ENCODE measurements at regions of chr10 and their contacts with region 1.

Region 1: DNA sequence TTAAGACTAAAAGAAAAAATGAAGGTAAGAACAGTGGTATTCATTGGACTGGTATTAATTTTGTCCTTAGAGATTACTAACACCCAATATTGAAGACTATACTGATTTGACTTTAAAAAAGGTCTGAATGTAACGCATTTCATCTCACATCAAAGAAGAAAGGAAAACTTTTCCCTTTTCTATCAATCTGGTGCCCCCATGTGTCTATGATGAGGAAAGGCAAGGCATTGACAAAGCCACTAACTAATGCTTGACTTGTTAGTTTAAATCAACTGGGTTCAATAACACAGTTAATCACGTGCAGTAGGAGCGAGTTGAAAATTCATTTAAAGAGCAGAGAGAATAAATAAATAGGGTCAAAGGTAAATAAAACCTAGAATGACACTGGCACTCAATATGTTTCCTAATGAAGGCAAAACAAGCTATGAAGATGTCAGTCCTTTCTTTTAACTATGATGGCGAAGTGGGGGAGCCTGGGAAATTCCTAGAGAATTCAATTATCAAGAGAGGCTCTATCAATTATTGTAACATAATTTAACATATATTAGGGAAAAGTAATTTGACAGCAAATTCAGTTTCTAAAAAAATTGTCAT is 180.9 kb downstream of the ANK3 start:
- DNase-seq: no peak
- ATAC-seq: no peak
- H3K4me3 Mint-ChIP-seq: no peak overlapping the region
- H3K27ac Mint-ChIP-seq: no peak overlapping the region
- H3K4me1 Mint-ChIP-seq: peaks cover 8% of the 10 kb centered on the region
- H3K27me3 Mint-ChIP-seq: peaks cover 2% of the 10 kb centered on the region
- CTCF ChIP-seq: peak; percentile 60

Region 2: GRCh38 chr10:60099998-60100747 is 108.6 kb before region 1 on chr10:
- CTCF ChIA-PET with region 1: interaction called, 5 read pairs
- POLR2A ChIA-PET with region 1: no interaction called
- intact Hi-C with region 1: loop called (anchors 5 kb)
- DNase-seq: peak; percentile 9
- ATAC-seq: no peak
- H3K4me3 Mint-ChIP-seq: no peak overlapping the region
- H3K27ac Mint-ChIP-seq: no peak overlapping the region
- H3K4me1 Mint-ChIP-seq: no peaks in the 10 kb centered on the region
- H3K27me3 Mint-ChIP-seq: peaks cover 2% of the 10 kb centered on the region
- CTCF ChIP-seq: peak; percentile 75

Region 3: GRCh38 chr10:60148264-60148840 is 60.4 kb before region 1 on chr10:
- CTCF ChIA-PET with region 1: no interaction called
- POLR2A ChIA-PET with region 1: no interaction called
- intact Hi-C with region 1: no loop called
- DNase-seq: no peak
- ATAC-seq: no peak
- H3K4me3 Mint-ChIP-seq: no peak overlapping the region
- H3K27ac Mint-ChIP-seq: no peak overlapping the region
- H3K4me1 Mint-ChIP-seq: no peaks in the 10 kb centered on the region
- H3K27me3 Mint-ChIP-seq: no peaks in the 10 kb centered on the region
- CTCF ChIP-seq: no peak

Region 4: DNA sequence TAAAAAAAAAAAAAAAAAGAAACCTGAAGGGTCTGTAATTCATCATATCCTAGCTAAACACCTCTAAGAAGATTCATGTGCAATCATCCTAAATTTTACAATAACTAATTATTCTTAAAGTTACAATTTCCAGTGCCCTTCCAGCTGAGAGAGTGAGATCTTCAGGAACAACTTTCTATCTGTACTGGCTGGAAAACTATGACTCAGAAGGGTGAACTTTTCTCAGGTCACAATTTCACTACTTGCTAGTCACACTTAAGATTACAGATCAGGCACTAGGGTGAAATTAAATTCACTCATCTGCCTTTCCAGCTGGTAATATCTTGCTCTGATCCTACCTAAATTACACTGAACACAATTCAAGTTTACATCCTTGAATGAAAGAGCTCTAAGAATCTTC is 22.1 kb after region 1 on chr10:
- CTCF ChIA-PET with region 1: no interaction called
- POLR2A ChIA-PET with region 1: no interaction called
- intact Hi-C with region 1: no loop called
- DNase-seq: no peak
- ATAC-seq: no peak
- H3K4me3 Mint-ChIP-seq: no peak overlapping the region
- H3K27ac Mint-ChIP-seq: no peak overlapping the region
- H3K4me1 Mint-ChIP-seq: no peaks in the 10 kb centered on the region
- H3K27me3 Mint-ChIP-seq: no peaks in the 10 kb centered on the region
- CTCF ChIP-seq: no peak

Region 5: DNA sequence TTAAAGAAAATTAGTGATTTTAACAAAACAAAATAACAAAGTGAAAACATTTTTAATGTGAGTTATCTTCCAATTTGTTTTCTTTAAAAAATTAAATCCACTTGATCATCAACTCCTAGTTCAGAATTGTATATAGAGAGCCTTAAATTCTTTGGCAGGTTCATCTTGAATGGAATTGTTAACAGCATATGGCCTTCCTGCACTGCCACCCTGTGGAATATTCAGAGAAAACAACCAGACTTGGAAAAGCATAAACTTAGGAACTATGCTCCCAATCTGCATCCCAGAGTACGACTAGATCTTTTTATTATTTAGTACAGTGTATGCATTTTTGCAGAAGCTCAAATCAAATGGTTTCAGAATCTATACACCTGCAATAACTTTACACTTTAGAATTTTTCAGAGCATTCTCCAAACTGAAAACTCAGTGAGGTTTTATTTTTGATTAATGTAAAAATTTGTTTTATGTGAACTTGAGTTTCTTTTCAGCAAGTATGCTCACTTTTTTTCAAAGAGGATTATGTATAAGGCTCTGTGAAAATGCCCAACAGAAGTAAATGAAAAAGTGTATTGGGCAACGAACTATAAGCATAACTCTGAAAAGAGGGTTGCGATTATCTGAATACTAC is 225.8 kb after region 1 on chr10:
- CTCF ChIA-PET with region 1: interaction called, 5 read pairs
- POLR2A ChIA-PET with region 1: no interaction called
- intact Hi-C with region 1: loop called (anchors 10 kb)
- DNase-seq: peak; percentile 12
- ATAC-seq: no peak
- H3K4me3 Mint-ChIP-seq: no peak overlapping the region
- H3K27ac Mint-ChIP-seq: no peak overlapping the region
- H3K4me1 Mint-ChIP-seq: no peaks in the 10 kb centered on the region
- H3K27me3 Mint-ChIP-seq: no peaks in the 10 kb centered on the region
- CTCF ChIP-seq: peak; percentile 63

Measured in activated CD8-positive, alpha-beta T cell treated with anti-CD3 and anti-CD28 coated beads for 36 hours (primary cell).